Mammary epithelial cell (primary cell): ENCODE measurements at regions of chr6 and their contacts with region 1.

Region 1: GRCh38 chr6:89242574-89243330 is 25.6 kb upstream of the GABRR1 start:
- DNase-seq: peak; percentile 27
- H3K4me3 ChIP-seq: no peak overlapping the region
- H3K27ac ChIP-seq: no peak overlapping the region
- H3K4me1 ChIP-seq: no peaks in the 10 kb centered on the region
- H3K27me3 ChIP-seq: peaks cover 5% of the 10 kb centered on the region
- CTCF ChIP-seq: peak; percentile 44 to 60

Region 2: DNA sequence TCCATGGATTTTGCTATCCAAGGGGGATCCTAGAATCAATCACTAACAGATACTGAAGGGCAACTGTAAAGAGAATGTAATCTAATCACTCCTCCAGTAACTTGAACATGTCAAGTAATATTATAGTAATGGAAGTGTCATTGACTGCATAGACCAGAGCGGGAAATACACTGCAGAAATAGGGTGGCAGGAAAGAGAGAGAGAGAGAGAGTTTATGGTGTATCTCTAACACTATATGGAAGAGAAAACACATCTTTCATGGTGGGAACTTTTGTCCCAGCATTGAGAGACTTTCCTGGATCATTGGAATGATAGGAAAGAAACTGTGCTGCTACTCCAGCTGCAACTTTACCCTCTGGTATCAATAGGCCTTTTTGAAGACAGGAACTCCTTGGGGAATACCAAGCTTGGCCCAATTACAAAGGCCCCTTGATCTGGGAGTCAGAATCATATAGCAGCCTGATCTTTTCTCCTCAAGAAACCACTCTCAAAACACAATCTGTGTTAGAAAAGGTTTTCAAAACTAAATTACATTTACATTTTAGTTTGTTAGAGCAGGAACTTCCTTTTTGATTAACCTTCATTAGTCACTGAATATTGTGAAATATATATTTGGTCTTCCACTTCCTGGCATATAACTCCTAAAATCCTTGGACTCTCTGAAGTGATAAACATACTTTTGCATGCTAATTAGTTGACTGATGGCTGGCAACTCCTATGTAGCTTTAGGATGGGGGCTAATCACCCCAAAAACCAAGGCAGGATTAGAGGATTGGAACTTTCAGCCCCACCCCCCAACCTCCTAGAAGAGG is 249.8 kb before region 1 on chr6:
- CTCF ChIA-PET with region 1: no interaction called
- dilution Hi-C with region 1: no loop called
- in situ Hi-C with region 1: no loop called
- intact Hi-C with region 1: no loop called
- DNase-seq: no peak
- H3K4me3 ChIP-seq: no peak overlapping the region
- H3K27ac ChIP-seq: no peak overlapping the region
- H3K4me1 ChIP-seq: no peaks in the 10 kb centered on the region
- H3K27me3 ChIP-seq: no peaks in the 10 kb centered on the region
- CTCF ChIP-seq: no peak

Region 3: DNA sequence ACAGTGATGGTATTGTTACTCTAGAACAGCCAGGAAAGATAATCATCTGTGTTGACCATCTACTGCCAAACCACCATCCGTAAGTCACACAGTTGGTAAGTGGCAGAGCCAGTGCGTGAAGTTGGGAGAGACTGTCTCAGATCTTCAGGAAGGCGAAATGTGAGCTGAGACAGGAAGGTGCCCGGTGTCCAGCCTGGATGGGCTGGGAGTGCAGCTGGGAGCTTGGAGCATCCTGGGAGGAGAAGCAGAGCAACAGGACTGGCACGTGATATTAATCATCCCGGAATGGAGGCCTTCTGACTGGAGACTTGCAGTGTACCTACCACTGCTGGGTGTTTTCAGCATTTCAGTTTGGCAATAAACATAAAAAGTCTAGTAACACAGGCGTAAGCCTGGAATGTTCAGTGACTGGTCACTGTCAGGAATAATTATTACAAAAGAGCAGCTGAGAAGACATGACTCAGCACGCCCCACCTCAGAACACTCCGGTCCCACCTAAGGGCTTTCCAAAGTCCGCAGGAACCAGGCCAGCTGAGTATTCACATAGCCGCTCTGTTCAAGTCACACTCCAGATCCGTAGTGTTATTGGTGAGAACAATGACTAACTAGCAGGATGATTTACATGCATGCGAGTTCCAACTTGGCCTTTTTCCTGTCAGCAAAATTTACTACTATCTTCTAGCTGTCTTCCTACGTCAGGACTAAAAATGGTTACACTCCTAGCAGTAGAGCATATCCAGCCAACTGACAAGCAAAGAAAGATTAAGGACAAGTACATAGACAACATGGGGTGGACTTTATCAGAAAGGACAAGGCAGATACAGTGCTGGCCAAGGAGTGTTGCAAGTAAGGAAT is 207.3 kb before region 1 on chr6:
- CTCF ChIA-PET with region 1: interaction called, 23 read pairs
- dilution Hi-C with region 1: no loop called
- in situ Hi-C with region 1: no loop called
- intact Hi-C with region 1: no loop called
- DNase-seq: peak; percentile 100
- H3K4me3 ChIP-seq: peak overlapping the region; percentile 8 to 47 (median 37)
- H3K27ac ChIP-seq: peak overlapping the region; percentile 98
- H3K4me1 ChIP-seq: peaks cover 27% of the 10 kb centered on the region
- H3K27me3 ChIP-seq: no peaks in the 10 kb centered on the region
- CTCF ChIP-seq: no peak

Region 4: GRCh38 chr6:89117211-89118108 is 125.3 kb before region 1 on chr6 and contains the start of gene SRSF12:
- CTCF ChIA-PET with region 1: interaction called, 11 read pairs
- dilution Hi-C with region 1: no loop called
- in situ Hi-C with region 1: loop called (anchors 10 to 25 kb)
- intact Hi-C with region 1: loop called (anchors 1 kb)
- DNase-seq: peak; percentile 51
- H3K4me3 ChIP-seq: peak within 1 kb of the TSS; percentile 59 to 62 (median 61)
- H3K27ac ChIP-seq: no peak within 1 kb of the TSS
- H3K4me1 ChIP-seq: peaks cover 12% of the 10 kb centered on the region
- H3K27me3 ChIP-seq: peaks cover 5% of the 10 kb centered on the region
- CTCF ChIP-seq: no peak
- total RNA-seq, gene SRSF12: 0.54 to 3.8 TPM

Region 5: GRCh38 chr6:89122625-89123024 is 120.1 kb before region 1 on chr6:
- CTCF ChIA-PET with region 1: interaction called, 11 read pairs
- dilution Hi-C with region 1: no loop called
- in situ Hi-C with region 1: loop called (anchors 10 to 25 kb)
- intact Hi-C with region 1: loop called (anchors 1 kb)
- DNase-seq: peak; percentile 27
- H3K4me3 ChIP-seq: no peak overlapping the region
- H3K27ac ChIP-seq: no peak overlapping the region
- H3K4me1 ChIP-seq: peaks cover 6% of the 10 kb centered on the region
- H3K27me3 ChIP-seq: peaks cover 5% of the 10 kb centered on the region
- CTCF ChIP-seq: peak; percentile 27 to 69